Esophagus muscularis mucosa (tissue), 4 donors: ENCODE measurements at regions of chr5 and their contacts with region 1.

Region 1: GRCh38 chr5:135551593-135552447 is 16.1 kb upstream of the NEUROG1 start:
- DNase-seq: no peak
- H3K4me3 ChIP-seq: no peak overlapping the region
- H3K27ac ChIP-seq: no peak overlapping the region
- H3K4me1 ChIP-seq: no peaks in the 10 kb centered on the region
- H3K27me3 ChIP-seq: peaks cover 0 to 83% (median 0%) of the 10 kb centered on the region in 4 donors
- CTCF ChIP-seq: peak; percentile 72 to 84 (median 84)
- EP300 ChIP-seq: no peak
- POLR2A ChIP-seq: no peak

Region 2: DNA sequence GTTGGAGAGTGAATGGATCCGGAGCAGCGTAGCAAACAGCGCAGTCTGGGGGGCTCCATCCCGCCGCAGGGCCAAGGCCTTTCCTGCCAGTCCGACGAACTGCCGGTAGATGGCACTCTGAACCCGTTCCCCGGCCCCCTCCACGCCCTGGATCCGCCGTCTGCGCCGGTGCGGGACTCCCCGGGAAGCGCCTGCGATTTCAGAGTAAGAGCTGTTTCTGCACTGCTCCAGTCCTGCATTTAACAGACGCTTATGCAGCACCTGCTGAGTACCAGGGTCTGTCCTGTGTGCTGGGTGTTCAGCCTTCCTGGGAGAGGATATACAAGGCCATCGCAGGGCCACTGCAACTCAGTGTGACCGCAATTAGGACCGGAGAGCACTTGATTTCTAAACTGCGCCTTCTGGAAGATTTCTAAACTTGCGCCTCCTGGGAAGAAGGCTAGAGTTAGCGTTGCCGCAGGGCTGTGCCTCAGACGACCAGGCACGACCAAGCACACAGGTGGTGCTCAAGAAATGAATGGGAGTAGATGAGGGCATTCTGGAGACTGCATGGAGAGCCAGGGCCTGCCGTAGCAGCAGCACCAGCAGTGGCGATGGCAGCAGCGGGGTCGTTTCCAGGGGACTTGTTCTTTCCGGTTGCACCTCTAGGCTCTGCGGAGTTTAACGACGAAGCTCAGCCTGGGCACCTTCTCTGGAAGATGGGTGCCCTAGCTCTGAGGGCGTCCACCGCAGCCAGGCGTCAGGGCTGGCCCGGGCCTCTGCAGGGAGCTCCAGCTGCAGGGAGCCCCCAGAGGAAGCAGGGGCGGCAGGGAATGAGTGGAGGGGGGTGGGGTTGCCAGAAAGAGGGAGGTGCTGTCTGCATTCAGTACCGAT is 85.4 kb before region 1 on chr5:
- intact Hi-C with region 1: loop called (anchors 1 kb)
- DNase-seq: no peak
- H3K4me3 ChIP-seq: peak overlapping the region; percentile 29 to 51 (median 37)
- H3K27ac ChIP-seq: no peak overlapping the region
- H3K4me1 ChIP-seq: peaks cover 0 to 13% (median 11%) of the 10 kb centered on the region in 4 donors
- H3K27me3 ChIP-seq: peaks cover 0 to 70% (median 0%) of the 10 kb centered on the region in 4 donors
- CTCF ChIP-seq: peak; percentile 81 to 91 (median 84)
- EP300 ChIP-seq: no peak
- POLR2A ChIP-seq: no peak